Motor neuron (in vitro differentiated cells): ENCODE measurements at regions of chr12 and their contacts with region 1.

Region 1: DNA sequence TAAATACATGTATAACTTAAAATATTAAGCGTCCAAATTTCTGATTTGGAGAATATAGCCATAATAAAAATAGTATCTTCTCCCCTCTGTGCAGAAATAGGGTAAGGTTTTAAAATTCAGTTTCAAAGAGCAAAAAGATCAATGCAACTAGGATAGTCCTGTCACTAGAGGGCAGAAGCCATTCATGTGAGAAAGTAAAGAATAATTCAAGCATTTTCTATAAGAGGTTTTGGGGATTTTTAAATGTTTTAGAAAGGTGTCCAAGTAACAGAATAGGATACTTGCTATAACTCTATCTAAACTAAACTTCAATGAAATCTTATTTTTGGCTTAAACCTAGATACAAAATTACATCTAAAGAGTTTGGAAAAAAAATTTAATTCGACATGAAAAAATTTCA is 50.3 kb downstream of the ADAMTS20 start:
- ATAC-seq: no peak
- H3K4me3 ChIP-seq: no peak overlapping the region
- H3K27ac ChIP-seq: no peak overlapping the region
- H3K4me1 ChIP-seq: no peaks in the 10 kb centered on the region

Region 2: DNA sequence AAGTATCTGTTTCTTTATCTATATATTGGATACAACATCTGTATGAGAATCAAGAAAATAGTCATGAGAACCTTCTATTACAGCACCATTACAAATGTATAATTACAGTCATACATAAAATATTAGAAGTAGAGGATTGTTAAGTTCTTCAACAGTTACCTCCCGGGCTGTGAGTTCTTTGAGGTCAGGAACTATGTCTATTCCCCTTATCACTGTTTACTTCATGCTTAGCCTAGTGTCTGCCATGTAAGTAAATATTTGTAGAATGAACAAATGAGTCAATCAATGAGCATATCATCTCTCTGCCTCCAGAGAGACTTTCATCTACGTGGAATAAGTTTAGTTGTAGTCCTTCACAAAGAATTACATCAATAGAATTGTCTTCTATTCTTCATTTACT is 209.6 kb after region 1 on chr12:
- in situ Hi-C with region 1: loop called in 1 of 9 experiments (anchors 25 kb)
- ATAC-seq: no peak
- H3K4me3 ChIP-seq: no peak overlapping the region
- H3K27ac ChIP-seq: no peak overlapping the region
- H3K4me1 ChIP-seq: no peaks in the 10 kb centered on the region

Region 3: GRCh38 chr12:43882578-43883178 is 381.0 kb after region 1 on chr12:
- in situ Hi-C with region 1: loop called in 1 of 9 experiments (anchors 25 kb)
- ATAC-seq: peak in 7 of 8 experiments; percentile 45 to 86 (median 72)
- H3K4me3 ChIP-seq: no peak overlapping the region
- H3K27ac ChIP-seq: no peak overlapping the region
- H3K4me1 ChIP-seq: no peaks in the 10 kb centered on the region

Region 4: DNA sequence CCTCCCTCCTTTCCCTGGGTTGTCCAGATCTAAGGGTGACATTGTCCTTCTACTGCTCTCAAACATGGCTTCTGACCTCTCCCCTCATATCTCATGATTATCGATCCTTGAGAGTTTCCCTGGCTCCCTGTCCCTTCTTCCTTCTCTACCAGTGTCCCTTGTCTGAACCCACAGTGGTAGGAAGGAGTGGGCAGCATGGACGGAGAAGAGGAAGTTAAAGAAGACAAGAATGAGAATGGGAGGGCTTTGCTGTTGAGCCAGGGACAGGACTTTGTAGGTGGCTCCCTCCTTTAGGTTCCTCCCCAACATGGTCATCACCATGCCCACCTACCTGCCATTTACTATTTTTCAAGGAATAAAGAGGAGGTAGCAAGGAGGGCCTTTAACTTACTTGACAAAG is 500.9 kb after region 1 on chr12:
- in situ Hi-C with region 1: no loop called
- ATAC-seq: no peak
- H3K4me3 ChIP-seq: no peak overlapping the region
- H3K27ac ChIP-seq: no peak overlapping the region
- H3K4me1 ChIP-seq: no peaks in the 10 kb centered on the region